ENCODE measurements at regions of chr14 and their contacts with region 1.

Region 1: GRCh38 chr14:90399541-90400444 is 3.0 kb downstream of the CALM1 start:
- DNase-seq: peak; percentile 84 to 91 (median 90)
- ATAC-seq: peak; percentile 48 to 86 (median 76)
- H3K4me3 ChIP-seq: peak overlapping the region in 2 of 4 donors; percentile 63 to 93
- H3K27ac ChIP-seq: peak overlapping the region in 2 of 4 donors; percentile 87 to 88
- H3K4me1 ChIP-seq: peaks cover 11 to 23% (median 18%) of the 10 kb centered on the region in 3 donors
- H3K27me3 ChIP-seq: no peaks in the 10 kb centered on the region
- CTCF ChIP-seq: peak; percentile 97 to 99 (median 98)

Region 2: DNA sequence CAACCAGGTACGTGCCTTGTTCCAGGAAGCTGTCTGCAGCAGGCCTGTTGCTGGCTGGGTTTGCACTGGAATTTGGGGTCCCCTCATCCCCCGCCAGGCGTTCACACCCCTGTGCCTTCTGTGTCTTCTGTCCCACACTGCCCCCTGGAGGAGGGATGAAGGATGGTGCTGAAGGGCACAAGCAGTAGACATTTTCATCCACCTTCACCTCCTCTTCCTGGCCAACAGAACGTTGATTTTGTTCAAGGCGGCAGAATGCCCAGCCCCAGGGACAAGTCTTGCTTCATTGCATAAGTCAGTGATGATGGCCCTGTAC is 119.1 kb after region 1 on chr14:
- intact Hi-C with region 1: loop called in 2 of 3 experiments (anchors 10 kb)
- DNase-seq: peak in 1 of 6 donors; percentile 52
- ATAC-seq: peak in 2 of 4 donors; percentile 39 to 47
- H3K4me3 ChIP-seq: no peak overlapping the region
- H3K27ac ChIP-seq: no peak overlapping the region
- H3K4me1 ChIP-seq: no peaks in the 10 kb centered on the region
- H3K27me3 ChIP-seq: no peaks in the 10 kb centered on the region
- CTCF ChIP-seq: peak; percentile 17 to 51 (median 38)

Region 3: GRCh38 chr14:90681929-90682328 is 282.1 kb after region 1 on chr14:
- intact Hi-C with region 1: loop called in 1 of 3 experiments (anchors 10 kb)
- DNase-seq: no peak
- ATAC-seq: peak in 2 of 4 donors; percentile 49 to 60
- H3K4me3 ChIP-seq: no peak overlapping the region
- H3K27ac ChIP-seq: no peak overlapping the region
- H3K4me1 ChIP-seq: no peaks in the 10 kb centered on the region
- H3K27me3 ChIP-seq: no peaks in the 10 kb centered on the region
- CTCF ChIP-seq: no peak

Measured in pancreas (tissue), 10 donors.